ENCODE measurements at regions of chr22 and their contacts with region 1.

Region 1: DNA sequence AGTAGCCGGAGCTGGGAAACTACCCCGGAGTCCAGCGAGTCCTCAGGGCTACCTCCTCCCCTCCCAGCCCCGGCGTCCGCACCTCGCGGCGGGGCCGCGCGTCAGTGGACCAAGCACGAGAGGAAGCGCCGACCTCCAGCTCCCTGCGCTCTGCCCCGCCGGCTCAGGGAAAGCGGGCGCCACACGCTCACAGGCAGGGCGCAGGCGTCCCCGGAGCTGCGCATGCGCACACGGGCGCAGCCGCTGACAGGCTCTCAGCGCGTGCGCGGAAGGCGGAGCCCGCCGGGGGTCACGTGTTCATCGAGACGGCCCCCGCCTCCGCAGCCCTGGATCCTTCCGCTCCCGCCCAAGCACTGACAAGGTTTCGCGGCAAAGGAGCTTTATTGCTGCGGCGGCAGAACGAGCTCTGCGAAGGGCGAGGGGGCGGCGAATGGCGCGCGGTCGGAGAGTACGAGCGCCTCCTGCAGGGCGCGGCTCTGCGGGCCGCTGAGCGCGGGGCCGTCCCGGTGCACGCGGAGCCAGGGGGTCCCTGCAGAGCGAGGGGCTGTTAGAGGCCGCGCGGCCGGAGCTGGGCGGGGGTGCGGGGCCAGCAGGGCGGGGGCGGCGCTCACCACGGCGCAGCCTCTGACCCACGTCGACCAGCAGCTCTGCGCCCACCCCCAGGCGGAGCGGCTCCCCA is at the start of gene SCO2:
- DNase-seq: peak; percentile 100
- H3K4me3 ChIP-seq: peak within 1 kb of the TSS; percentile 80 to 81
- H3K27ac ChIP-seq: peak within 1 kb of the TSS; percentile 68 to 93
- H3K4me1 ChIP-seq: peaks cover 7 to 24% of the 10 kb centered on the region in 2 experiments; a peak in 2 of 4 replicates
- H3K27me3 ChIP-seq: no peaks in the 10 kb centered on the region
- CTCF ChIP-seq: peak; percentile 50
- EP300 ChIP-seq: no peak
- RAD21 ChIP-seq: peak; percentile 36; the same call in 1 of the 2 replicates
- polyA plus RNA-seq, gene SCO2: 3.2 and 4.0 TPM in 2 replicates

Region 2: DNA sequence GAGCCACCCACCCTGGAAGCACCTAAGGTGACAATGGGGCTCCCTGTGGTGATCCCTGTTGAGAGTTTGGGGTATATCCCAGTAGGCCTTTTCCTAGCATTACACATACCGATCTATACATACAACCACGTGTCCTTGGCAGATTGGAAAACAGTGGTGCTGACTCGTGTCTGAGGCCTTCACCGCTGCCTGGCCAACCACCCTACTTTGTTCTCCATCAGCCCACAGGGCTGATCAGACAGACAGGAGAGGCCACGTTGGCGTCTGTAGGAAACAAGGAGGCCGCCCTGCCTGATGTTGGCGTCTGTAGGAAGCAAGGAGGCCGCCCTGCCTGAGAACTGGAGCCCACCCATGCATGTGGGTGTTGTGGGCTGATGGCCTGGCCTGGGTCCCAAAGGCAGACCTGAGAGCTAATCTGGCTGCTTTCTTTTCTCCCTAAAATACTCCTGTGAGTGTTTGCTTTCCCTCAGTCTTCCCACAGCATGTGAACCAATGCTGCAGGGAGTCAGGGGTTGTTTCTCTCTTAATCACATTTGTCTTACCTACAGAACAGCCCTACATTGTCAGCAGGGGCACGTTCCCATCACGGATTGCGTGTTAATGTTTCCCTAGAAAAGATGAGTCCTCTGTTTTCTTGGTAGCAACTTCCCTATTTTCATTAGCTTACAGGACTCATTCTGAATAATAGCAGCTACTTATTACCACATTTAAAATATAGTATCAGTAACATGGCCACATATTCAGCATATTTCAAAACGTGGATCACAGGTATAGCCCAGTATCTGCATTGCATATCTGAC is 107.9 kb before region 1 on chr22:
- CTCF ChIA-PET with region 1: no interaction called
- POLR2A ChIA-PET with region 1: no interaction called
- DNase-seq: no peak
- H3K4me3 ChIP-seq: no peak overlapping the region
- H3K27ac ChIP-seq: no peak overlapping the region
- H3K4me1 ChIP-seq: no peaks in the 10 kb centered on the region
- H3K27me3 ChIP-seq: no peaks in the 10 kb centered on the region
- CTCF ChIP-seq: no peak
- EP300 ChIP-seq: no peak
- RAD21 ChIP-seq: no peak

Region 3: GRCh38 chr22:50507991-50508884 is 17.3 kb before region 1 on chr22 and contains the start of gene NCAPH2:
- CTCF ChIA-PET with region 1: interaction called, 20 read pairs
- POLR2A ChIA-PET with region 1: interaction called, 11 read pairs
- DNase-seq: peak; percentile 100
- H3K4me3 ChIP-seq: peak within 1 kb of the TSS; percentile 81 to 85
- H3K27ac ChIP-seq: peak within 1 kb of the TSS; percentile 75 to 83
- H3K4me1 ChIP-seq: peaks cover 7 to 14% of the 10 kb centered on the region in 2 experiments; a peak in 3 of 4 replicates
- H3K27me3 ChIP-seq: no peaks in the 10 kb centered on the region
- CTCF ChIP-seq: no peak
- EP300 ChIP-seq: peak in 1 of 2 experiments; percentile 36; a peak in 1 of 4 replicates
- RAD21 ChIP-seq: no peak
- polyA plus RNA-seq, gene NCAPH2: 21.1 and 22.4 TPM in 2 replicates

Region 4: GRCh38 chr22:50544078-50544745 is 18.7 kb after region 1 on chr22:
- CTCF ChIA-PET with region 1: interaction called, 14 read pairs
- POLR2A ChIA-PET with region 1: interaction called, 7 read pairs
- DNase-seq: peak; percentile 83
- H3K4me3 ChIP-seq: no peak overlapping the region
- H3K27ac ChIP-seq: no peak overlapping the region
- H3K4me1 ChIP-seq: peaks cover 6 to 9% of the 10 kb centered on the region in 2 experiments; a peak in 2 of 4 replicates
- H3K27me3 ChIP-seq: no peaks in the 10 kb centered on the region
- CTCF ChIP-seq: no peak
- EP300 ChIP-seq: no peak
- RAD21 ChIP-seq: no peak

Region 5: DNA sequence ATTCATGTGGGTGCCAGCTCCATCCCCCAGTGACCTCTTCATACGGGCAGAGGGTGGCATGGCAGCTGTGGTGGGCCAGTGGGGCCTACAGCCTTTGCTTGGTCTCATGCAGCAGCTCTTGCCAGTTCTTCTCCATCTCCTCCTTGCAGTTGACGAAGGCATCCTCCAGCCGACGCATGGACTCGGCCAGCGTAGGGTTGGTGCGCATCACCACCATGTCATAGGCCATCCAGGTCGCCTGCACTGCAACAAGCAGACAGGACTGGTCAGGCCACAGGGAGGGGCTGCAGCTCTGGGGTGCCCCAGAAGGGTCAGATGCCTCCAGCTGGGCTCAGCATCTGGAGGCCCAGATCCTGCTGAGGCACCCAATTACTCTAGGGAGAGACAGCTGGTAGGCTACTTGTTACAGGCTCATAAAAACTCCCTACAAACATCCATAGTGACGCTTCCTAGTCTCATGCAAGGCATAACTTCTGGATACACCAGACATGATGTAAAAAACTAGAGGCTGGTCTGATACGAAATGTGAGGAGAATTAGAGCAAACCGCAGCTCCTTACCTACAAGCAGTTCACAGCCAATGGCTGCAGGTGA is 25.7 kb after region 1 on chr22:
- CTCF ChIA-PET with region 1: interaction called, 10 read pairs
- POLR2A ChIA-PET with region 1: interaction called, 7 read pairs
- DNase-seq: no peak
- H3K4me3 ChIP-seq: no peak overlapping the region
- H3K27ac ChIP-seq: no peak overlapping the region
- H3K4me1 ChIP-seq: no peaks in the 10 kb centered on the region; a peak in 1 of 4 replicates
- H3K27me3 ChIP-seq: no peaks in the 10 kb centered on the region
- CTCF ChIP-seq: no peak
- EP300 ChIP-seq: no peak
- RAD21 ChIP-seq: no peak

Region 6: DNA sequence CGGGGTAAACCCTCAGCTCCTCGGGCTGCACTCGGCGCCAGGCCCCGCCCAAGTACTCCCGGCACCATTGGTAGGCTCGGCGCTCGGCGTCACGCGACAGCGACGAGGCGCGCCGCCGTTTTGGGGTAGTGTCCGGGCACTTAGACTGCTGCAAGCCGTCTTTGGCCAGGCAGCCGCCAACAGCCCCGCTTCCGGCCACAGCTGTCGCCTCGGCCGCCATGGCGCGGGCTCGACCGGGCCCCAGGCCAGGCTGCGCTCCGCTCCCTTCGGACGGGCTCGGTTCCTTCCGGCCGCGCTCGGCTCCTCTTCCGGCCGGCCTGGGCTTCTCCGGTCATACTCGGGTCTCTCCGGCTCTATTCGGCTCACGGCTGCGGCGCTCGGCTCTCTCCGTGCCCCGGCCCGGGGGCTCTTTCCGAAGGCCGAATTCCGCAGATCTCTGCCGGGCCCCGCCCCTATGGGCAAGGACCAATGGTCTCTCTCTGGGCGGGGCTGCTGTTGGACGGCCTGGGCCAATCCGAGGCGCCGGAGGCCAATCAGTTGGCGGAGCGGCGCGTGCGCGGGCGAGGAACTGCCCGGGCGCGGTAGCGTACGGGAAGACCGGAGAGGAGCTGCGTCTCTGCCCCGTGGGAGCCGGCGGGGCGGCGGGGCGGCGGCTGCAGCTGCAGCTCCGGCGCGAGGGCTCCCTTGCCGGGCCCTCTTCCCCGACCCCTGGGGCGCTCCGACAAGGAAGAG is 57.2 kb after region 1 on chr22 and contains the start of gene CHKB:
- CTCF ChIA-PET with region 1: interaction called, 9 read pairs
- POLR2A ChIA-PET with region 1: interaction called, 10 read pairs
- DNase-seq: peak; percentile 99
- H3K4me3 ChIP-seq: peak within 1 kb of the TSS; percentile 89 to 94
- H3K27ac ChIP-seq: peak within 1 kb of the TSS; percentile 83 to 96; a peak in 3 of 4 replicates
- H3K4me1 ChIP-seq: peaks cover 0 to 14% of the 10 kb centered on the region in 2 experiments; a peak in 1 of 4 replicates
- H3K27me3 ChIP-seq: no peaks in the 10 kb centered on the region
- CTCF ChIP-seq: no peak
- EP300 ChIP-seq: no peak
- RAD21 ChIP-seq: no peak
- polyA plus RNA-seq, gene CHKB: 39.6 and 57.4 TPM in 2 replicates

Measured in SK-N-SH (cell line).